Aorta (tissue), 5 donors: ENCODE measurements at regions of chr18 and their contacts with region 1.

Region 1: DNA sequence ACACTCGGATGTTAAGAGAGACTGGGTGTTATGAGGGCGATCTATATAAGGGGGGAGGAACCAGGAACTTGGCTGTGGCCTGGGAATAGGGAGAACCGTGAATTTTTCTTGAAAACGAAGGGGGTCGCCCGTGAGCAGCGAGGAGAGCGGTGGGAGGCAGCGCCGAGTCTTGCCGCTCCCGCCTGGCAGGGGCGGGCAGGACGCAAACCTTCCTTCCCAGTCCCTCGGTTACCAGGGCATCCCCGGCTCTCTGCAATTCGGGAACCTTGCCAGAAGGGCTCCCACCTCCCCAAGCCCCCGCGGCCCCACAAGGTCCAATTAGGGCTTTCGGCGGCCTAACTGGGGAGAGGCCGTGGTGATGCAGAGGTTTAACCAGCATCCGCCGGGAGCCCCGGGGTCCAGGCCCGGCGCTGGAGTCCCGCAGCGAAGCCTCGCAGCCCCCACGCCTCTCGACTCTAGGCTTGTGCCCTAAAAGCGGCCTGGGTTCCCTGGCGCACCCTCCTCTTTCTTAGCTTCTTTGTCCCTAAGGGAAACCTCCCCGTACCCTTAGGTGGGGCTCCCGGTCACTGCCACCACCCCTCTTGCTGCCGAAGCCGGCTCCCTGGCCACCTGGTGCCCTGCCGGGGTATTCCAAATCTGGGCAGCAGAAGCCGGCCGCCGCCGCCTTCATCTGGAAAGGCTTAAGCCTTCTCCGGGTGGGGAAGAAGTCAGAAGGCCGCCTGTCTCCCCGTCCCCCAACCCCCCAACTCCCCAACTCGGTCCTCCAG is 680 bp upstream of the FHOD3 start:
- DNase-seq: peak; percentile 82 to 91
- ATAC-seq: peak; percentile 87
- H3K4me3 ChIP-seq: peak overlapping the region; percentile 59 to 80
- H3K27ac ChIP-seq: peak overlapping the region; percentile 18 to 60
- H3K4me1 ChIP-seq: no peaks in the 10 kb centered on the region
- H3K27me3 ChIP-seq: no peaks in the 10 kb centered on the region

Region 2: GRCh38 chr18:36366994-36367839 is 70.4 kb after region 1 on chr18:
- intact Hi-C with region 1: loop called (anchors 5 kb)
- DNase-seq: peak; percentile 77 to 83
- ATAC-seq: peak; percentile 78
- H3K4me3 ChIP-seq: no peak overlapping the region
- H3K27ac ChIP-seq: peak overlapping the region in 1 of 2 donors; percentile 64
- H3K4me1 ChIP-seq: peaks cover 4 to 8% of the 10 kb centered on the region in 2 donors
- H3K27me3 ChIP-seq: no peaks in the 10 kb centered on the region

Region 3: GRCh38 chr18:36419905-36420531 is 123.2 kb after region 1 on chr18:
- intact Hi-C with region 1: loop called in 1 of 2 experiments (anchors 10 kb)
- DNase-seq: no peak
- ATAC-seq: peak; percentile 42
- H3K4me3 ChIP-seq: no peak overlapping the region
- H3K27ac ChIP-seq: peak overlapping the region; percentile 9 to 94
- H3K4me1 ChIP-seq: peaks cover 5 to 8% of the 10 kb centered on the region in 2 donors
- H3K27me3 ChIP-seq: no peaks in the 10 kb centered on the region

Region 4: GRCh38 chr18:36441426-36442240 is 144.8 kb after region 1 on chr18:
- intact Hi-C with region 1: loop called in 1 of 2 experiments (anchors 2 kb)
- DNase-seq: no peak
- ATAC-seq: peak; percentile 80
- H3K4me3 ChIP-seq: no peak overlapping the region
- H3K27ac ChIP-seq: peak overlapping the region; percentile 84 to 93
- H3K4me1 ChIP-seq: peaks cover 5% of the 10 kb centered on the region in 2 donors
- H3K27me3 ChIP-seq: no peaks in the 10 kb centered on the region

Region 5: GRCh38 chr18:36558234-36558633 is 261.4 kb after region 1 on chr18:
- intact Hi-C with region 1: no loop called
- DNase-seq: no peak
- ATAC-seq: no peak
- H3K4me3 ChIP-seq: no peak overlapping the region
- H3K27ac ChIP-seq: no peak overlapping the region
- H3K4me1 ChIP-seq: no peaks in the 10 kb centered on the region
- H3K27me3 ChIP-seq: no peaks in the 10 kb centered on the region

Region 6: GRCh38 chr18:36572135-36572856 is 275.5 kb after region 1 on chr18:
- intact Hi-C with region 1: loop called (anchors 2 to 5 kb)
- DNase-seq: no peak
- ATAC-seq: peak; percentile 67
- H3K4me3 ChIP-seq: no peak overlapping the region
- H3K27ac ChIP-seq: no peak overlapping the region
- H3K4me1 ChIP-seq: no peaks in the 10 kb centered on the region
- H3K27me3 ChIP-seq: no peaks in the 10 kb centered on the region

Region 7: GRCh38 chr18:36757081-36757480 is 460.2 kb after region 1 on chr18:
- intact Hi-C with region 1: loop called in 1 of 2 experiments (anchors 10 kb)
- DNase-seq: no peak
- ATAC-seq: no peak
- H3K4me3 ChIP-seq: no peak overlapping the region
- H3K27ac ChIP-seq: no peak overlapping the region
- H3K4me1 ChIP-seq: no peaks in the 10 kb centered on the region
- H3K27me3 ChIP-seq: no peaks in the 10 kb centered on the region